Transverse colon (tissue), 4 donors: ENCODE measurements at regions of chr7 and their contacts with region 1.

Region 1: GRCh38 chr7:49791088-49791741 is 17.8 kb downstream of the VWC2 start:
- DNase-seq: peak; percentile 26
- H3K4me3 ChIP-seq: no peak overlapping the region
- H3K27ac ChIP-seq: no peak overlapping the region
- H3K4me1 ChIP-seq: no peaks in the 10 kb centered on the region
- H3K27me3 ChIP-seq: no peaks in the 10 kb centered on the region
- CTCF ChIP-seq: peak; percentile 32 to 56 (median 49)
- EP300 ChIP-seq: no peak
- POLR2A ChIP-seq: no peak

Region 2: DNA sequence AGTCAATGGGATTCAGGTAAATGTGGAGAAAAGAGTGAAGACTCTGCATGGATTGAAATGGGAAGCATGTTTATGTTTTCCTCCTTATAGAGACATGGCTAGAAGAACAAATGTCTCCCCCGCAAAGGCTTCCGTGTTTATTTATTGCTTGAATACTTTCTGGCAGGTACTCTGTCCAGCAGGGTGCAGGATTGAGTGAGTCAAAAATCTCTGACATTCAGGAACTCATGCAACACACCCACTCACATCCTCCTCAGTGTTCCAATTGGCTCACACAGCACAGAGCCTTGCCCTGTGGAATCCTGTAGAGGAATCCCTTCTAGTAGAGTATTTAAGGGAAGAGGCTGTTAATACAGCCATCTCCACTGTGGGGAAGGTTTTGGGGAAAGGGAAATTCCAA is 308.1 kb before region 1 on chr7:
- in situ Hi-C with region 1: loop called in 1 of 4 experiments (anchors 25 kb)
- intact Hi-C with region 1: no loop called
- DNase-seq: peak; percentile 8
- H3K4me3 ChIP-seq: no peak overlapping the region
- H3K27ac ChIP-seq: no peak overlapping the region
- H3K4me1 ChIP-seq: peaks cover 0 to 32% (median 8%) of the 10 kb centered on the region in 4 donors
- H3K27me3 ChIP-seq: no peaks in the 10 kb centered on the region
- CTCF ChIP-seq: peak in 2 of 5 experiments; percentile 10 to 26
- EP300 ChIP-seq: no peak
- POLR2A ChIP-seq: no peak